ENCODE measurements at regions of chr4 and their contacts with region 1.

Region 1: DNA sequence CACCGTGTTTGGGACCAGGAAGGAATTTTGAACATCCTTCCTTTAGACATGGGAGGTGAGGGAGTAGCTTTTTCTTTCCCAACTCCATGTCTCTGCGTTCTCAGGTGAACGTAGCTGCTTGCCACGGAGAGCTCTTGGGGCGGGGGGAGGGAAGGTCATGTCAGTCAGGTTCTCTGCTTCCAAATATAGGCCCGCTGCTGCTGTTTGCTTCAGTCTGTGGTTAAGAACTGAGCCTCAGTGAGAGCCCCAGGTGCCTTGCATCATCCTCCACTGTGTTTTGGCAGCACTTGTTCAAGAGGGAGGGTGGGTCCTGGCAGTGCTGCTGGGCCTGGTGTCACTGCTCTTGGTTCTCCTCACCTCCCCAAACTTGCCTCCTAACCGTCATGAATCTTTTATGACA is 46.5 kb downstream of the HADH start:
- DNase-seq: peak; percentile 98
- H3K4me3 ChIP-seq: peak overlapping the region; percentile 64
- H3K27ac ChIP-seq: peak overlapping the region; percentile 100
- H3K4me1 ChIP-seq: peaks cover 87% of the 10 kb centered on the region
- CTCF ChIP-seq: no peak

Region 2: DNA sequence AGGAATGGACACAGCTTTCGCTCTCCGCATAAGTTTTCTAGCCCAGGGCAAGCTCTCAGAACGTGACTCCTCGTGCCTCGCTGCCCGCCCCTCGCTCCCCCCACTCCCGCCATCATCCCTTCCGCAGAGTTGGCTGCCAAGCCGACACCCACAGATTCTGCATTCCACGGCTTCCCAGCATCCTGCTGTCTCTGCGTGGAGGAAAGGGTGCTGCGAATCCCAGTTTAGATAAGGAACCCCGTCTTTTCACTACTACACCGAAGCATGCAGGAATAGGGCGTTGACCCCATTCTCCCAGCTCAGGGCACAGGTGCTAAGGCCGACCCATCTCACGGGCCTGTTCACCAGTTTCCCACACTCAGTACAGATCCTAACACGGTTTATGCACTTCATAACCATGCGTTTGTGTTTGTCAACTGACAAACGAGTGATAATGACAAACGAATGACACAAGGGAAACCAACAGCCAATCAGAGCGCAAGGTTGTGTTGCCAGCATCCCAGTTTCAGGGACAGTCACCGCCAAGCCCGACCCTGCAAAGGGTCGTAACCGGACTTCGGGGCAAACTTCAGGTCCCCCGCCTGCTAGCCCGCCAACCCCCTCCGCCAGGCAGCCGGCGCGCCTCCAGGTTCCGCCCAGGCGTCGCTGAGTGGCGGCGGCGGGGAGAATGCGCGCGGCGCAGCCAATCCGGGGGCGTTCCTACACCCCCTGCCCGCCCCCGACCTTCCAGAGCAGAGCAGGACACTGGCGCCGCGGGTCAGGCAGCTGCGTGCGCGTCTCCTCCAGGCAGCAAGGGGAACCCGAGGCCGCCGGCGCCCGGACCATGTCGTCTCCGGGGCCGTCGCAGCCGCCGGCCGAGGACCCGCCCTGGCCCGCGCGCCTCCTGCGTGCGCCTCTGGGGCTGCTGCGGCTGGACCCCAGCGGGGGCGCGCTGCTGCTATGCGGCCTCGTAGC is 105.1 kb before region 1 on chr4 and contains the start of gene CYP2U1:
- CTCF ChIA-PET with region 1: no interaction called
- POLR2A ChIA-PET with region 1: interaction called, 3 read pairs
- intact Hi-C with region 1: loop called (anchors 1 kb)
- DNase-seq: peak; percentile 76
- H3K4me3 ChIP-seq: peak within 1 kb of the TSS; percentile 75
- H3K27ac ChIP-seq: peak within 1 kb of the TSS; percentile 41
- H3K4me1 ChIP-seq: peaks cover 36% of the 10 kb centered on the region
- CTCF ChIP-seq: 0 out of 2 replicates have a peak, but pooled peaks have one; percentile 18
- total RNA-seq, gene CYP2U1: 5.6 and 7.4 TPM in 2 replicates

Region 3: DNA sequence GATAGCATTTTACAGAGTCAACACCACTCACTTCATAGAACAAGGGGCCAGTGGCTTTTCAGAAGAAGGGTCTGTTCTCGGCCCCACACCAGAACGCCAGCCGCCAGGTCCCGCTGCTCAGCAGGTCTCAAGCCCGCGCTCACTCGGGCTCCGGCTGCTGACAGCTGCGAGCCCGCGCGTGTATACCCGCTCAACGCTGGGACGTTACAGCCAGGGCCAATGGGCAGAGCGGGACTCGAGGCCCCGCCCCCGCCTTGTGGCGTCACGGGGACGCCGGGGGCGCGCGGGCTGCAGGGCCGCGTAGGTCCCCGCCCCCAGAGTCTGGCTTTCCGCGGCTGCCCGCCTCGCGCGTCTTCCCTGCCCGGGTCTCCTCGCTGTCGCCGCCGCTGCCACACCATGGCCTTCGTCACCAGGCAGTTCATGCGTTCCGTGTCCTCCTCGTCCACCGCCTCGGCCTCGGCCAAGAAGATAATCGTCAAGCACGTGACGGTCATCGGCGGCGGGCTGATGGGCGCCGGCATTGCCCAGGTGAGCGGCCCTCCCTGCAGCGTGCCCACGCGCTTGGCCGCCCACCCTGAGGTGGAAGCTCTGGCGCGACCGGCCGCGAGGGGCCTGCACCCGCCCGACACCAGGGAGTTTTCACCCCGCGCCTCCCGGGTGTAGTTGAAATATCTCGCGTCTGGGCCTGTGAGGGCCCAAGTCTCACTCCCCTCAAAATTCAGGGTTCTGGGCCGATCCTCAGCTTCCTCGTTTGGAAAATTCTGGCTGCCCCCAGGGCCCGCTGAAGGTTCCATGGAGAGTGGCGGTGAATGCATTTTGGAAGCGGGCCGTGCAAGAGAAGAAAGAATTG is 46.5 kb before region 1 on chr4 and contains the start of gene HADH:
- CTCF ChIA-PET with region 1: no interaction called
- POLR2A ChIA-PET with region 1: interaction called, 10 read pairs
- intact Hi-C with region 1: loop called (anchors 2 kb)
- DNase-seq: peak; percentile 96
- H3K4me3 ChIP-seq: peak within 1 kb of the TSS; percentile 99
- H3K27ac ChIP-seq: peak within 1 kb of the TSS; percentile 63
- H3K4me1 ChIP-seq: peaks cover 46% of the 10 kb centered on the region
- CTCF ChIP-seq: no peak
- total RNA-seq, gene HADH: 31.2 and 32.3 TPM in 2 replicates

Region 4: GRCh38 chr4:108113229-108113628 is 77.0 kb after region 1 on chr4:
- CTCF ChIA-PET with region 1: no interaction called
- POLR2A ChIA-PET with region 1: interaction called, 13 read pairs
- intact Hi-C with region 1: loop called (anchors 2 kb)
- DNase-seq: no peak
- H3K4me3 ChIP-seq: no peak overlapping the region
- H3K27ac ChIP-seq: no peak overlapping the region
- H3K4me1 ChIP-seq: peaks cover 88% of the 10 kb centered on the region
- CTCF ChIP-seq: no peak

Region 5: GRCh38 chr4:108118490-108118889 is 82.3 kb after region 1 on chr4:
- CTCF ChIA-PET with region 1: no interaction called
- POLR2A ChIA-PET with region 1: interaction called, 13 read pairs
- intact Hi-C with region 1: loop called (anchors 2 kb)
- DNase-seq: peak; percentile 20
- H3K4me3 ChIP-seq: no peak overlapping the region
- H3K27ac ChIP-seq: peak overlapping the region; percentile 0
- H3K4me1 ChIP-seq: peaks cover 77% of the 10 kb centered on the region
- CTCF ChIP-seq: no peak

Region 6: GRCh38 chr4:108166441-108167315 is 130.5 kb after region 1 on chr4:
- CTCF ChIA-PET with region 1: no interaction called
- POLR2A ChIA-PET with region 1: interaction called, 205 read pairs
- intact Hi-C with region 1: loop called (anchors 1 kb)
- DNase-seq: peak; percentile 79
- H3K4me3 ChIP-seq: peak overlapping the region; percentile 83
- H3K27ac ChIP-seq: peak overlapping the region; percentile 89
- H3K4me1 ChIP-seq: peaks cover 52% of the 10 kb centered on the region
- CTCF ChIP-seq: peak; percentile 38; the same call in 1 of the 2 replicates

Region 7: GRCh38 chr4:108560616-108561015 is 524.4 kb after region 1 on chr4:
- CTCF ChIA-PET with region 1: no interaction called
- POLR2A ChIA-PET with region 1: interaction called, 24 read pairs
- intact Hi-C with region 1: no loop called
- DNase-seq: no peak
- H3K4me3 ChIP-seq: no peak overlapping the region
- H3K27ac ChIP-seq: no peak overlapping the region
- H3K4me1 ChIP-seq: peaks cover 34% of the 10 kb centered on the region
- CTCF ChIP-seq: no peak

Region 8: GRCh38 chr4:108601532-108601931 is 565.3 kb after region 1 on chr4:
- CTCF ChIA-PET with region 1: no interaction called
- POLR2A ChIA-PET with region 1: no interaction called
- intact Hi-C with region 1: no loop called
- DNase-seq: no peak
- H3K4me3 ChIP-seq: no peak overlapping the region
- H3K27ac ChIP-seq: no peak overlapping the region
- H3K4me1 ChIP-seq: no peaks in the 10 kb centered on the region
- CTCF ChIP-seq: no peak